ENCODE measurements at regions of chr19 and their contacts with region 1.

Region 1: GRCh38 chr19:21151460-21151859 is 9.6 kb downstream of the ZNF431 start:
- DNase-seq: no peak
- H3K4me3 Mint-ChIP-seq: no peak overlapping the region
- H3K27ac Mint-ChIP-seq: no peak overlapping the region
- H3K4me1 Mint-ChIP-seq: peaks cover 20% of the 10 kb centered on the region
- H3K27me3 Mint-ChIP-seq: no peaks in the 10 kb centered on the region

Region 2: GRCh38 chr19:21092109-21092508 is 59.4 kb before region 1 on chr19:
- CTCF ChIA-PET with region 1: no interaction called
- POLR2A ChIA-PET with region 1: no interaction called
- intact Hi-C with region 1: loop called (anchors 1 kb)
- DNase-seq: no peak
- H3K4me3 Mint-ChIP-seq: no peak overlapping the region
- H3K27ac Mint-ChIP-seq: no peak overlapping the region
- H3K4me1 Mint-ChIP-seq: no peaks in the 10 kb centered on the region
- H3K27me3 Mint-ChIP-seq: no peaks in the 10 kb centered on the region

Measured in activated CD4-positive, alpha-beta memory T cell treated with anti-CD3 and anti-CD28 coated beads for 36 hours (primary cell).